Common myeloid progenitor, CD34-positive (primary cell): ENCODE measurements at regions of chr7 and their contacts with region 1.

Region 1: DNA sequence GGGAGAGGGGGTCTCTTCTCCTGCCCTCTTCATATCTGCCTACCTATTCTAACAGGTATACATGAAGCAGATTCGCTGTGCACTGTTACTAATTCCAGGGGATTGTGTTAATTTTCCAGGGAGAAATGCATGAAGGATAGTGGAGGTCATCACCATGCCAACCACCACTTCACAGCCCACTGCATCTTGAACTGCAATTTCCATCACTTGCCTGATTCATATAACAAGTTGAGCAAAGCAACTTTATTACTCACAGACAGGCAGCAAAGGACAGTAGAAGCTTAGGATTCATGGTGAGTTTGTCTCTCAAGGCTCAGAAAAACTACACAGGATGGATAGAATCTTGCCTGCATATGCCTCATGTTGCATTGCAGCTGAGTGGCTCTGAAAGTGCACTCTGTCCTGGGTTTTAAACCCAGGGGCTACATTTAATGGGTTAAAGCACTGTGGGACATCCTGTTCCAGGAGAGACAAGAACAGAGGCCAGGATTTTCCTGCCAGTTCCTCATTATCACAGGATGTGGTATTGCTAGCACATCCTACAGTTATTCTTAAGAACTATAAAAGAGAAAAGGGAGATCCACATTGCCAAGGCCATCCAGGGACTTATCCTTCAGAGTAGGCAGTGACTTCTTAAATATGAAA is 136.9 kb upstream of the PRSS1 start:
- DNase-seq: no peak
- H3K4me3 ChIP-seq: no peak overlapping the region
- H3K27ac ChIP-seq: no peak overlapping the region
- H3K4me1 ChIP-seq: peaks cover 2 to 52% (median 39%) of the 10 kb centered on the region in 4 experiments
- H3K27me3 ChIP-seq: no peaks in the 10 kb centered on the region

Region 2: DNA sequence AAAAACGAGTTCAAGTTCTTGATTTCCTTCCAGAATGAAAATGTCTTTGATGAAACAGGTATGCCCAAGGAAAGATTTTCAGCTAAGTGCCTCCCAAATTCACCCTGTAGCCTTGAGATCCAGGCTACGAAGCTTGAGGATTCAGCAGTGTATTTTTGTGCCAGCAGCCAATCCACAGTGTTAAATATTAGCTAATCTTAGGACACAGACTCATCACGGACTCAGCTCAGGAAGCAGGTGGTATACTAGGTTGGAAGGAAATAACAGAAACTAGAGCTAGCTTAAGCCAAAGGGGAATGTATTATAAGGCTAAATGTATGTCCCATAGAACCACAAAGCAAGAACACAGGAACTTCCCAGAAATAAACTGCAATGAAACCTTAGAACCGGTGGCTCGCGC is 14.1 kb before region 1 on chr7:
- CTCF ChIA-PET with region 1: interaction called, 19 read pairs
- POLR2A ChIA-PET with region 1: no interaction called
- DNase-seq: peak in 2 of 3 donors; percentile 86 to 91
- H3K4me3 ChIP-seq: no peak overlapping the region
- H3K27ac ChIP-seq: peak overlapping the region in 1 of 2 experiments; percentile 7
- H3K4me1 ChIP-seq: peaks cover 8 to 32% (median 27%) of the 10 kb centered on the region in 4 experiments
- H3K27me3 ChIP-seq: no peaks in the 10 kb centered on the region

Region 3: DNA sequence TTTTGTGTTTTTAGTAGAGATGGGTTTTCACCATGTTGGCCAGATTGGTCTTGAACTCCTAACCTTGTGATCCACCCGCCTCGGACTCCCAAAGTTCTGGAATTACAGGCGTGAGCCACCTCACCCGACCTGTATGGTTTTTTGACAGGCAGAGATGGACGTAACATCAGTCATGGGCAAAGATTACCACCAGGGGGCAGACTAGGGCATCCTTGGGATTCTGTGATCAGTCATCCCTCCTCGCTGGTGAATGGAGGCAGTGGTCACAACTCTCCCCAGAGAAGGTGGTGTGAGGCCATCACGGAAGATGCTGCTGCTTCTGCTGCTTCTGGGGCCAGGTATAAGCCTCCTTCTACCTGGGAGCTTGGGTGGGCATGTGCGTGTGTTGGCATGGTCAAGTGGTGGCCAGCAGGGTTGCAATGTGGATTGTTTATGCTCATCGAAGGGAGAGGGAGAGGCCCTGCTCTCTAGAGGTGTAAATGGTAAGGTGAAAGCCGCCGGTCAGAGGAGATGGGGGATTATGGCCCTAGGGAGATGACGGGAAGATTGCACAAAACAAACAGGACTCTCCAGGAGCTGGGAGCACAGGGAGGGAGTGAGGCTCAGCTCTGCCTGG is 14.2 kb after region 1 on chr7:
- CTCF ChIA-PET with region 1: interaction called, 19 read pairs
- POLR2A ChIA-PET with region 1: no interaction called
- DNase-seq: peak; percentile 69 to 85 (median 80)
- H3K4me3 ChIP-seq: peak overlapping the region in 2 of 7 experiments; percentile 15 to 51
- H3K27ac ChIP-seq: no peak overlapping the region
- H3K4me1 ChIP-seq: peaks cover 3 to 25% (median 13%) of the 10 kb centered on the region in 4 experiments
- H3K27me3 ChIP-seq: no peaks in the 10 kb centered on the region

Region 4: GRCh38 chr7:142885284-142886230 is 273.2 kb after region 1 on chr7 and contains the start of gene TRPV6:
- CTCF ChIA-PET with region 1: no interaction called
- POLR2A ChIA-PET with region 1: no interaction called
- DNase-seq: no peak
- H3K4me3 ChIP-seq: no peak within 1 kb of the TSS
- H3K27ac ChIP-seq: no peak within 1 kb of the TSS
- H3K4me1 ChIP-seq: no peaks in the 10 kb centered on the region
- H3K27me3 ChIP-seq: peaks cover 0 to 2% (median 0%) of the 10 kb centered on the region in 5 experiments